ENCODE measurements at regions of chr1 and their contacts with region 1.

Region 1: GRCh38 chr1:109667452-109668122 is at the start of gene GSTM2:
- DNase-seq: no peak
- H3K4me3 ChIP-seq: no peak within 1 kb of the TSS
- H3K27ac ChIP-seq: no peak within 1 kb of the TSS
- H3K4me1 ChIP-seq: peaks cover 19% of the 10 kb centered on the region
- H3K27me3 ChIP-seq: no peaks in the 10 kb centered on the region
- CTCF ChIP-seq: no peak
- total RNA-seq, gene GSTM2: 9.3 and 10.2 TPM in 2 replicates

Region 2: DNA sequence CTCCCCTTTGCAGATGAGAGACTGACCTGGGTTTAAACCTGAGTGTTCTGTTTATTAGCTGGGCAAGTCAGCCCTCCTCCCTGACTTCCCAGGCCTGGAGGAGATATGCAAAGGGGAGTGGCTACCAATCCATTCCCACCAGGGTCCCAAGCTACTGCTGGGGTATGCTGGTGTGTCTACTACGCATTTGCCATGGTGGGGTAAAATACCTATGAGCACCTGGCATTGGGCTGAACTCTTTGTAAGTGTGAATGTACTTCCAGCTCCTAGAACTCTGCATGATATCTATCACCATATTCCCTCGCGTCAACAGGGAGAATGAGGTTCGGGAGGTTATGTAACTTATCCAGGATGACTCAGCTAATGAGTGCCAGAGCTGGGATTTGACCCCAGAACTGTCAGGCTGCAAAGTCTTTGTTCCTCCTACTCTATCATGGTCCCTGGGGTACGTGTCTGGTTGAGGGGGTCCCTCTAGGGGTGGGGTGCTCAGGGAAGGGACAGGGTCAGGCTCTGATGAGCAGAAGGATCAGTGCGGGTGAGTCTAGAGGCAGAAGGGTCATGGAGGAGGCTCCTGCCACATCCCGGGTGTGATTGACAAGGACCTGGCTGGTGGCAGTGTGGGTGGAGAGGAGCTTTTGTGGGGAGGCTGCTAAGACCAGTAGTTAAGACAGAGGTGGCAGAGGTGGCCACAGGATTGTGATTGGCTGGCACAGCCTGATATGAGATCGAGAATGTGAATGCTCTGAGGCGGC is 31.2 kb before region 1 on chr1:
- CTCF ChIA-PET with region 1: interaction called, 12 read pairs
- POLR2A ChIA-PET with region 1: no interaction called
- intact Hi-C with region 1: no loop called
- DNase-seq: peak; percentile 63 to 70
- H3K4me3 ChIP-seq: no peak overlapping the region
- H3K27ac ChIP-seq: peak overlapping the region; percentile 52
- H3K4me1 ChIP-seq: peaks cover 18% of the 10 kb centered on the region
- H3K27me3 ChIP-seq: no peaks in the 10 kb centered on the region
- CTCF ChIP-seq: no peak

Region 3: DNA sequence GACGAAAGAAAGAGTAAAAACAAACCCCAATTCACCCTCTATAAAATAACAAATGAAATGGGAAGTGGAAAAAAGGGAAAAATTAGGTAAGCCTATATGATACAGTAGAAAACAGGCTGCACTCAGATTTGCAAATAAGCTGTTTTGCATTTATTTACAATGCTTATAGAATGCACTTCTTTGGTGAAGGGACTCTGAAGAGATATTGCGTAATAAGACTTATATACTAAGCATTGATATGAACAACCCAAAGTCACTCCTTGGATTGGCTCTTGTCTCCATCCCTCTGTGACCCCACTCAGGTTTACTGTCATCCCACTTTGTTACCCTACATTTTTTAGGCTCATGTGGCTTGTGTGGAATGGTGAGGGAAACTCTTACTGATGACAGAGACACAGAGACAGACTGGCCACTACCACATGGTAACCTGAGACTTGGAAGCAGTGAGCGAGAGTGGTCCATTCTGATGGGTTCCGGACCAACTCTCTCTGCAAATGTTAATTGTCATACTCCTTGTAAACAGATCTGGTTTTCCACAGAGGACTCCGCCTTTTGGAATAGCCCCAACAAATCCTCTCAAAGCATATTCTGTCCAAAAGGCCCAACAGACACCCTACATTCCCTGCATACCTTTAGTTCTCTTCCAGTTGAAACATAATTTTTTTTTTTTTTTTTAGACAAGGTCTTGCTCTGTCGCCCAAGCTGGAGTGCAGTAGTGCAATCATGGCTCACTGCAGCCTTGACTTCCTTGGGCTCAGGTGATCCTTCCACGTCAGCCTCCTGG is 55.5 kb after region 1 on chr1:
- CTCF ChIA-PET with region 1: no interaction called
- POLR2A ChIA-PET with region 1: no interaction called
- intact Hi-C with region 1: no loop called
- DNase-seq: peak in 1 of 2 experiments; percentile 19
- H3K4me3 ChIP-seq: no peak overlapping the region
- H3K27ac ChIP-seq: no peak overlapping the region
- H3K4me1 ChIP-seq: peaks cover 36% of the 10 kb centered on the region
- H3K27me3 ChIP-seq: no peaks in the 10 kb centered on the region
- CTCF ChIP-seq: no peak

Region 4: DNA sequence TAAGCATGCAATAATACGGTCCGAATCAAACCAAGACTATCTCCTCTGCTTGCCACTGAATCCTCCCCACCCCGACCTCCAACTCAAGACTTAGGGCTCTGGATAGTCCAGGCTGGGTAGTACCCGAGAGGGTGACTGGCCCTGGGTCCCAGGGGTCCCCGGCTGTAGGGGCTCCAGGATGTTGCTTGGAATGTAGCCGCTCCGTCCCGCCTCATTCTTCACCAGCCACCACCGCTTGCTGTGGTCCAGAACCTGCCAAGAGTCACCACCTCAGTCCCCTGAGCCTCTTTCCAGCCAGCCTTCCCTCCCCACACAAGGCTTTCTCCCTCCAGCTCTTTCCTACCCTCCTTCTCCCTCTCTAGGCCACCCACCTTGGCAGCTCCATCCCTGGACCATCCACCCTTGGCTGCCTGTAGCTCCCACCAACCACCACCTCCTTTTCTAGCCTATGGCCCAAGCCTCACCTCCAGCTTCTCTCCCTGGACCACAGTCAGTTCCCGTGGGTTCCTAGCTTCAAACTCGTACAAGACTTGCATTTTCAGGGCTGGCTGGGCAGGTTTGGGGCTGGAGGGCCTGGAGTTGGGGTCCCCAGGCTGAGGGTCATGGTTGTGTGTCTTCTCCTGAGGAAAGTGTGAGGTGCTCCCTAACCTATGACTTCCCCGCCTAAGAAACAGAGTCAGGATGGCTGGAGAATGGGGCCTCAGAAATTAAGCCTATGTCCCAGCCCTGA is 84.1 kb after region 1 on chr1:
- CTCF ChIA-PET with region 1: no interaction called
- POLR2A ChIA-PET with region 1: interaction called, 10 read pairs
- intact Hi-C with region 1: no loop called
- DNase-seq: no peak
- H3K4me3 ChIP-seq: no peak overlapping the region
- H3K27ac ChIP-seq: no peak overlapping the region
- H3K4me1 ChIP-seq: no peaks in the 10 kb centered on the region
- H3K27me3 ChIP-seq: peaks cover 22% of the 10 kb centered on the region
- CTCF ChIP-seq: no peak

Region 5: GRCh38 chr1:110243574-110243973 is 576.0 kb after region 1 on chr1:
- CTCF ChIA-PET with region 1: no interaction called
- POLR2A ChIA-PET with region 1: no interaction called
- intact Hi-C with region 1: no loop called
- DNase-seq: no peak
- H3K4me3 ChIP-seq: no peak overlapping the region
- H3K27ac ChIP-seq: no peak overlapping the region
- H3K4me1 ChIP-seq: no peaks in the 10 kb centered on the region
- H3K27me3 ChIP-seq: no peaks in the 10 kb centered on the region
- CTCF ChIP-seq: no peak

Measured in PC-9 (cell line).